Activated CD8-positive, alpha-beta T cell treated with anti-CD3 and anti-CD28 coated beads for 36 hours (primary cell): ENCODE measurements at regions of chr9 and their contacts with region 1.

Region 1: DNA sequence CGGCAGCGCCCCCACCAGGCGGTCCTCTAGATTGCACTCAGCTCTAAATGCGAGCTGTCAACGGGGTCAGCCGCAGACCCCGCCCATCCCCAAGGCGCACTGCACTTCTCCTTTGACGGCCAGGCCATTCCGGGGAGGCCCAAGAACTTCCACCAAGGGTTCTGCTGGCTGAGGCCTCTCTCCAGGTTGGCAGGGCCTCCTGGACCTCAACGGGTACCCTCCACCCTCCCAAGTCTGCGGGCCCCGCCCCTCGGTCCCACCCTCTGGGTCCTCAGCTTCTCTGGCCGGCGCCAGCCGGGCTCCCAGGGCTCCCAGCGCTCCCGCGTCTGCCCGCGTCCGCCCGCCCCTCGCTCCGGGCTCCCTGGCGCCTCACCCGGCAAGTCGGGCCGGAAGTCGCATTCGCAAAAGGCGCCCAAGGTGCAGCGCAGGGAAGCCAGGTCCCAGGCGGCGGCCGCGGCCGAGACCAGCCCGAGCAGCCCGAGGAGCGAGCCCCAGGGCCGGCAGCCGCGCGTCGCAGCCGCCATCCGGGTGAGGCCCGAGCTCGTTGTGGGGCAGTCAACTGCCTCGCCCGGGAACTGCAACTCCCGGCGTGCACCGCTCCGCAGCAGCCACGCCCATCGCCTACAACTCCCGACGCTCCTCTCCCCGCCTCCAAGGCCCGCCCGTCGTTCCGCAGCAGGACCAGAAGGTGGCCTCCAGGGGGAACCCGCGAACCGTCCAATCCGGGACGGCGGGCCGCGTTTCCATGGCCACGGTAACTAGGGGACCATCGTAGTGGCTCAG is at the start of gene TOR2A:
- DNase-seq: peak; percentile 99
- ATAC-seq: peak; percentile 92
- H3K4me3 Mint-ChIP-seq: peak within 1 kb of the TSS; percentile 77
- H3K27ac Mint-ChIP-seq: peak within 1 kb of the TSS; percentile 86
- H3K4me1 Mint-ChIP-seq: peaks cover 15% of the 10 kb centered on the region
- H3K27me3 Mint-ChIP-seq: no peaks in the 10 kb centered on the region
- CTCF ChIP-seq: peak; percentile 76
- total RNA-seq, gene TOR2A: 14.4 to 16.1 TPM

Region 2: GRCh38 chr9:127503947-127504782 is 230.8 kb before region 1 on chr9:
- CTCF ChIA-PET with region 1: interaction called, 12 read pairs
- POLR2A ChIA-PET with region 1: interaction called, 3 read pairs
- intact Hi-C with region 1: loop called (anchors 10 kb)
- DNase-seq: peak; percentile 92
- ATAC-seq: peak; percentile 94
- H3K4me3 Mint-ChIP-seq: no peak overlapping the region
- H3K27ac Mint-ChIP-seq: no peak overlapping the region
- H3K4me1 Mint-ChIP-seq: no peaks in the 10 kb centered on the region
- H3K27me3 Mint-ChIP-seq: no peaks in the 10 kb centered on the region
- CTCF ChIP-seq: peak; percentile 88

Region 3: GRCh38 chr9:127586537-127586936 is 148.4 kb before region 1 on chr9:
- CTCF ChIA-PET with region 1: interaction called, 62 read pairs
- POLR2A ChIA-PET with region 1: interaction called, 3 read pairs
- intact Hi-C with region 1: loop called (anchors 5 kb)
- DNase-seq: peak; percentile 77
- ATAC-seq: peak; percentile 76
- H3K4me3 Mint-ChIP-seq: no peak overlapping the region
- H3K27ac Mint-ChIP-seq: no peak overlapping the region
- H3K4me1 Mint-ChIP-seq: peaks cover 6% of the 10 kb centered on the region
- H3K27me3 Mint-ChIP-seq: peaks cover 9% of the 10 kb centered on the region
- CTCF ChIP-seq: peak; percentile 80

Region 4: DNA sequence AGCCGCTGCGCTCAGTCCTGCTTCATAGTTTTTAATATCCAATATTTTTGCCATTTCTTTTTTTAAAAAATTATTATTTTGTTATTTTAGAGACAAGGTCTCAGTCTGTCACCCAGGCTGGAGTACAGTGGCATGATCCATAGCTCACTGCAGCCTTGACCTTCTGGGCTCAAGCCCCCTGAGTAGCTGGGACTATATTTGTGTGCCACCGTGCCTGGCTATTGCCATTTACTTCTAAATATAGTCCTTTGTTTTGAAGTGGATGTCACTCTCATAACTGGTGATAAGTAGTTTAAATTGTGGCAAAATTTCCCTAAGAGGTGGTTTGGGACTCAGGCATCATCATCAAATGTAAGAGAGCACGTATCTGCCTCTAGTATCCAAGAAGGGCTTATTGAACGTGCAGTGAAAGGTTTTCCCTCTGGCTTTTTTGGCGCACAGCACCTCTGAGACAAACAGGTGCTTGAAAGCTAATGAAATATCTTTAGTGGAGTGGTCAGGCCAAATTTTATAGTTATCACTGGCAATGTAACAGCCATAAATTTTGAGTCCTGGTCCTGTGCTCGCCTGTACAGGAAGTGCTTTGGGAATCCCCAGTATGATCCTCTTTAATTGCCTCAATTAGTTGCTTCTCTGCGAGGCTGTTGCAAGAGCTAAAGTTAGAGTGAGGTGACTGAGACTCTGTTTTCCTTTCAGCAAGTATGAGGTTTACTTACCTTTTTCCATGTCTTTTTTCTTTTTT is 108.0 kb before region 1 on chr9:
- CTCF ChIA-PET with region 1: no interaction called
- POLR2A ChIA-PET with region 1: no interaction called
- intact Hi-C with region 1: no loop called
- DNase-seq: no peak
- ATAC-seq: no peak
- H3K4me3 Mint-ChIP-seq: no peak overlapping the region
- H3K27ac Mint-ChIP-seq: no peak overlapping the region
- H3K4me1 Mint-ChIP-seq: no peaks in the 10 kb centered on the region
- H3K27me3 Mint-ChIP-seq: no peaks in the 10 kb centered on the region
- CTCF ChIP-seq: no peak

Region 5: GRCh38 chr9:127705577-127706379 is 29.2 kb before region 1 on chr9:
- CTCF ChIA-PET with region 1: interaction called, 12 read pairs
- POLR2A ChIA-PET with region 1: no interaction called
- intact Hi-C with region 1: no loop called
- DNase-seq: no peak
- ATAC-seq: no peak
- H3K4me3 Mint-ChIP-seq: no peak overlapping the region
- H3K27ac Mint-ChIP-seq: no peak overlapping the region
- H3K4me1 Mint-ChIP-seq: peaks cover 11% of the 10 kb centered on the region
- H3K27me3 Mint-ChIP-seq: no peaks in the 10 kb centered on the region
- CTCF ChIP-seq: no peak

Region 6: DNA sequence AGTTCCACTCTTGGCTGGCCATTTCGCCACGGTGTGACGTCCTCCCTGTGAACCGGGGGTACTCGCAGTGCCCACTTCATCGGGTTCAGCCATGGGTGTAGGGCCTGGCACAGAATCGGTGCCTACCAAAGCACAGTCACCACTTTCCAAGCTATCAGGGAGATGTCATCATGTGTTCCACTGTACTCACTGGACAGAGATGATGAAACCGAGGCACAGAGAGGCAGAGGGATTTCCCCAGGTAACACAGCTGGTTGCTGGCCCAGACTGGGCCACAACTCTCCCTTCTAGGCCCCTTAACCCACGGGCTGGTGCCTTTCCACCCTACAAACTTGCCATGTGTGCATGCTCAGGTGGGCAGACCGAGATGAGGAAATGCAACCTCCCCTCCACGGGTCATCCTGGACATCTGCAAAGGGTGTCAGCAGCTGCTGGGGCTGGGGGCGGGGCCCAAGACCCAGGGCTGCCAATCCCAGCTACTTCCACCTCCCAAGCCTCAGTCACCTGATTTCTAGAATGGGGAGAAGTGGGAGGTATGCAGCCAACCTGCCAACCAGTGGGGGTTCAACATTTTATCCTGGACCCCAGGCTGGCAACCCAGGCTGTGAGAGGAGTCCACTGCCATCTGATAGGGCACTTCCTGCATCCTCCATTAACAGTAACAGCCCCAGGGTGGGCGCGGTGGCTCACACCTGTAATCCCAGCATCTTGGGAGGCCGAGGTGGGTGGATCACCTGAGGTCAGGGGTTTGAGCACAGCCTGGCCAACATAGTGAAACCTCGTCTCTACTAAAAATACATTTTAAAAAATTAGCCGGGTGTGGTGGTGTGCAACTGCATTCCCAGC is 44.4 kb after region 1 on chr9:
- CTCF ChIA-PET with region 1: interaction called, 58 read pairs
- POLR2A ChIA-PET with region 1: interaction called, 12 read pairs
- intact Hi-C with region 1: loop called (anchors 5 kb)
- DNase-seq: peak; percentile 87
- ATAC-seq: peak; percentile 57
- H3K4me3 Mint-ChIP-seq: peak overlapping the region; percentile 99
- H3K27ac Mint-ChIP-seq: peak overlapping the region; percentile 99
- H3K4me1 Mint-ChIP-seq: peaks cover 47% of the 10 kb centered on the region
- H3K27me3 Mint-ChIP-seq: no peaks in the 10 kb centered on the region
- CTCF ChIP-seq: no peak

Region 7: GRCh38 chr9:127869310-127870152 is 134.6 kb after region 1 on chr9:
- CTCF ChIA-PET with region 1: interaction called, 49 read pairs
- POLR2A ChIA-PET with region 1: interaction called, 4 read pairs
- intact Hi-C with region 1: loop called (anchors 5 kb)
- DNase-seq: peak; percentile 87
- ATAC-seq: peak; percentile 87
- H3K4me3 Mint-ChIP-seq: no peak overlapping the region
- H3K27ac Mint-ChIP-seq: no peak overlapping the region
- H3K4me1 Mint-ChIP-seq: peaks cover 14% of the 10 kb centered on the region
- H3K27me3 Mint-ChIP-seq: no peaks in the 10 kb centered on the region
- CTCF ChIP-seq: peak; percentile 96